ENCODE measurements at regions of chr5 and their contacts with region 1.

Region 1: DNA sequence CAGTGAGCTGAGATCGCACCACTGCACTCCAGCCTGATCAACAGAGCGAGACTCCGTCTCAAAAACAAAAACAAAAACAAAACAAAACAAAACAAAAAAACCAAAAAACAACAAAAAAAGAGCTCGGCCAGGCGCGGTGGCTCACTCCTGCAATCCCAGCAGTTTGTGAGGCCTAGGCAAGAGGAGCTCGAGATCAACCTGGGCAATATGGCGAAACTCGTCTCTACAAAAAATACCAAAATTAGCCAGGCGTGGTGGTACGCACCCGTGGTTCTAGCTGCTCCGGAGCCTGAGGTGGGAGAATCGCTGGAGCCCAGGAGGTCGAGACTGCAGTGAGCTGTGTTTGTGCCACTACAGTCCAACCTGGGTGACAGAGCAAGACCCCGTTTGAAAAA is 20.1 kb downstream of the TRIM7 start:
- DNase-seq: no peak
- ATAC-seq: no peak
- H3K4me3 Mint-ChIP-seq: peak overlapping the region; percentile 80
- H3K27ac Mint-ChIP-seq: peak overlapping the region; percentile 96
- H3K4me1 Mint-ChIP-seq: peaks cover 11% of the 10 kb centered on the region
- H3K27me3 Mint-ChIP-seq: peaks cover 25% of the 10 kb centered on the region
- CTCF ChIP-seq: no peak

Region 2: GRCh38 chr5:181167814-181168488 is 16.9 kb before region 1 on chr5:
- CTCF ChIA-PET with region 1: interaction called, 44 read pairs
- POLR2A ChIA-PET with region 1: interaction called, 3 read pairs
- DNase-seq: peak; percentile 90
- ATAC-seq: peak; percentile 22
- H3K4me3 Mint-ChIP-seq: peak overlapping the region; percentile 84
- H3K27ac Mint-ChIP-seq: no peak overlapping the region
- H3K4me1 Mint-ChIP-seq: peaks cover 28% of the 10 kb centered on the region
- H3K27me3 Mint-ChIP-seq: peaks cover 59% of the 10 kb centered on the region
- CTCF ChIP-seq: peak; percentile 69

Region 3: GRCh38 chr5:181173420-181174342 is 11.2 kb before region 1 on chr5:
- CTCF ChIA-PET with region 1: interaction called, 44 read pairs
- POLR2A ChIA-PET with region 1: interaction called, 3 read pairs
- DNase-seq: peak; percentile 92
- ATAC-seq: peak; percentile 81
- H3K4me3 Mint-ChIP-seq: peak overlapping the region; percentile 86
- H3K27ac Mint-ChIP-seq: peak overlapping the region; percentile 61
- H3K4me1 Mint-ChIP-seq: peaks cover 19% of the 10 kb centered on the region
- H3K27me3 Mint-ChIP-seq: peaks cover 62% of the 10 kb centered on the region
- CTCF ChIP-seq: no peak

Region 4: GRCh38 chr5:181198963-181199519 is 14.2 kb after region 1 on chr5:
- CTCF ChIA-PET with region 1: interaction called, 42 read pairs
- POLR2A ChIA-PET with region 1: no interaction called
- DNase-seq: peak; percentile 16
- ATAC-seq: peak; percentile 29
- H3K4me3 Mint-ChIP-seq: no peak overlapping the region
- H3K27ac Mint-ChIP-seq: no peak overlapping the region
- H3K4me1 Mint-ChIP-seq: peaks cover 54% of the 10 kb centered on the region
- H3K27me3 Mint-ChIP-seq: peaks cover 56% of the 10 kb centered on the region
- CTCF ChIP-seq: no peak

Region 5: GRCh38 chr5:181207214-181208107 is 22.6 kb after region 1 on chr5:
- CTCF ChIA-PET with region 1: interaction called, 42 read pairs
- POLR2A ChIA-PET with region 1: interaction called, 11 read pairs
- DNase-seq: peak; percentile 88
- ATAC-seq: peak; percentile 53
- H3K4me3 Mint-ChIP-seq: peak overlapping the region; percentile 94
- H3K27ac Mint-ChIP-seq: peak overlapping the region; percentile 52
- H3K4me1 Mint-ChIP-seq: peaks cover 18% of the 10 kb centered on the region
- H3K27me3 Mint-ChIP-seq: peaks cover 48% of the 10 kb centered on the region
- CTCF ChIP-seq: no peak

Region 6: GRCh38 chr5:181223058-181223728 is 38.3 kb after region 1 on chr5 and contains the start of gene TRIM41:
- CTCF ChIA-PET with region 1: interaction called, 16 read pairs
- POLR2A ChIA-PET with region 1: interaction called, 3 read pairs
- DNase-seq: peak; percentile 99
- ATAC-seq: peak; percentile 49
- H3K4me3 Mint-ChIP-seq: peak within 1 kb of the TSS; percentile 99
- H3K27ac Mint-ChIP-seq: peak within 1 kb of the TSS; percentile 98
- H3K4me1 Mint-ChIP-seq: peaks cover 19% of the 10 kb centered on the region
- H3K27me3 Mint-ChIP-seq: peaks cover 11% of the 10 kb centered on the region
- CTCF ChIP-seq: no peak
- total RNA-seq, gene TRIM41: 31.9 to 33.5 TPM (median 32.2 TPM) in 3 replicates

Measured in WTC11 (cell line).